ENCODE measurements at regions of chr3 and their contacts with region 1.

Region 1: DNA sequence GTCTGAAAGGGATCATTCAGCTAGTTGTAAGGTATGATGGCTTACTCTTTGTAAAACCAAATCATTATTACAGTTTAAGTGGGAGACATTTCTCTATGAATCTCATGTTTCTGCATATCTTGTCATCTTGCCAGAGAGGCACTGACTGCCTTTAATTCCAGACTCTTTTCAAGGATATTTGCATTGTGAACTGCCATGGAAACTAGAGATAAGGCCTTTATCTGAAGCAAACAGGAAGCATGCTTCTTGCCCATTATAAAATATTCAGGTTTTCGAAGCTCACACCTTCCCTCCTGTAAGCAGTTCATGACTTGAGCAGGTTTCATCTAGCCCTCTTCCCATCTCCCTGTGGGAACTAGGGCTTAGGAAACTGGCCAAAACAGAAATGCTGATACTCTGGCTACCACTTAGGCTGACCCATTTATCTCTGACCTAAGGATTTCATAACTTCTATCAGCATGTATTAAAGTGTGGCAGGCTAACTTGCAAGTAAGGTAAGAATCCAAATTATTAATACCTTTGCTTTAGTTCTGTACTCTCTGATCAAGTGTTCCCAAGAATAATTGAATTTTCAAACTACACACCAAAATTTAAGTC is 326.6 kb upstream of the ALCAM start:
- DNase-seq: no peak

Region 2: GRCh38 chr3:105014631-105015030 is 25.5 kb before region 1 on chr3:
- intact Hi-C with region 1: loop called in 1 of 2 experiments (anchors 1 kb)
- DNase-seq: no peak

Region 3: DNA sequence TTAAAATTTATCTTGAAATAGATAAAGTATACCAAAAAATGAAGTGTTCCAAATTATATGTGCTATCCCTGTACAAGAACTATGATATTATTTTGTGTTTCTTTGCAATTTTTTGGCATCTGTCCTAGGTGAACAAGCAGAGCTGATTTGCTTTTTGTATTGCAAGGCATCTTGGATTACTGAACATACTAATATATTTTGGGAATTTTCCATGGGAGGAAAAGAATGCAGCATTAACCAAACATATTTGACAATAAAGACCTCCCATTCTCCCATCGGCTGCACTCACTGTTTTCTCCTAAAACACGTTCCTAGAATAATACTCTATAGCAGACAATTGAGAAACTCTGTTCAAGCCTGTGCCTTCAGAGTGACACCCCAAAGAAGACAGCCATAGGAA is 61.5 kb after region 1 on chr3:
- intact Hi-C with region 1: no loop called
- DNase-seq: no peak

Region 4: GRCh38 chr3:105260385-105260784 is 220.3 kb after region 1 on chr3:
- intact Hi-C with region 1: no loop called
- DNase-seq: no peak

Measured in posterior vena cava (tissue), 2 donors.